Activated CD4-positive, alpha-beta memory T cell treated with anti-CD3 and anti-CD28 coated beads for 36 hours (primary cell): ENCODE measurements at regions of chr7 and their contacts with region 1.

Region 1: GRCh38 chr7:44633254-44634186 is 27.1 kb downstream of the OGDH start:
- DNase-seq: peak; percentile 84
- H3K4me3 Mint-ChIP-seq: peak overlapping the region; percentile 53
- H3K27ac Mint-ChIP-seq: peak overlapping the region; percentile 96
- H3K4me1 Mint-ChIP-seq: peaks cover 97% of the 10 kb centered on the region
- H3K27me3 Mint-ChIP-seq: no peaks in the 10 kb centered on the region

Region 2: DNA sequence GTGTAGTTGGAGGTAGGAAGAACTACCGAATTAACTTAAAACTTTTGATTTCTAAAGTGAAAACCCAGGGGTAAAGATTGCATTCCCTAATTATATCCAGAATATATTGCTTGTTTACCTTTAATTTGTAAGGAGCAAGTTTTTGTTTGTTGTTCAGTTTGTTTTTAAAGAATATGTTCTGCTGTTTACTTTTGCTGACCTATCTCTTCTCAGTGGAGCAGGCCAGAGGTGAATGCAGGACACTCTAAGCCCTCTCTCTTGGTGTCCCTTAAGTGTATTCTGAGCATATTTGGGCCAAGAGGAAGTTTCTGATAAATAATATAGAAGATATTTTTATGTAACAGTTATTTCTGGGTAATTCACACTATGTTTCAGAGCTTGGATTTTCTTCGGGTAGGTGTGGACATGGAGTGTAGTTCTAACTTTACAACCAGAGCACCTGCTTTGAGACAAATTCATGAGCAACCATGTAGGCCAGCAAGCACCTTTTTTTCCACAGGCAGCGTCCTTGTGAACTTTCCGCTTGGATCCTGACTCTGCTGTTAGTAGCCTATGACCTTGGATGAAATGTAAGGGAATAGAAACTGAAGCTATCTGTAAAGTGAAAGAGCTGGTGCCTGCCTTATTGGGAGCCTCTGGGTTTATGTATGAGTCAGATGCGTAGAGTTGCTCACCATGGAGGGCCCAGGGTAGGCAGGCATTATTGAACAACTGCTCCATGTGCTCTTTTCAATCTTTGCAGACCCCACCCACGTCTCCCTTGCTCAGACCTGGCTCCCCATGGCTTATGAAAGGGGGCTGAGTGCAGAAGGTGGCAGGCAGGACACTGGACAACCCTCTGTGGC is 11.0 kb before region 1 on chr7:
- CTCF ChIA-PET with region 1: interaction called, 11 read pairs
- POLR2A ChIA-PET with region 1: interaction called, 34 read pairs
- intact Hi-C with region 1: loop called (anchors 1 kb)
- DNase-seq: peak; percentile 74
- H3K4me3 Mint-ChIP-seq: peak overlapping the region; percentile 69
- H3K27ac Mint-ChIP-seq: peak overlapping the region; percentile 93
- H3K4me1 Mint-ChIP-seq: peaks cover 92% of the 10 kb centered on the region
- H3K27me3 Mint-ChIP-seq: no peaks in the 10 kb centered on the region

Region 3: DNA sequence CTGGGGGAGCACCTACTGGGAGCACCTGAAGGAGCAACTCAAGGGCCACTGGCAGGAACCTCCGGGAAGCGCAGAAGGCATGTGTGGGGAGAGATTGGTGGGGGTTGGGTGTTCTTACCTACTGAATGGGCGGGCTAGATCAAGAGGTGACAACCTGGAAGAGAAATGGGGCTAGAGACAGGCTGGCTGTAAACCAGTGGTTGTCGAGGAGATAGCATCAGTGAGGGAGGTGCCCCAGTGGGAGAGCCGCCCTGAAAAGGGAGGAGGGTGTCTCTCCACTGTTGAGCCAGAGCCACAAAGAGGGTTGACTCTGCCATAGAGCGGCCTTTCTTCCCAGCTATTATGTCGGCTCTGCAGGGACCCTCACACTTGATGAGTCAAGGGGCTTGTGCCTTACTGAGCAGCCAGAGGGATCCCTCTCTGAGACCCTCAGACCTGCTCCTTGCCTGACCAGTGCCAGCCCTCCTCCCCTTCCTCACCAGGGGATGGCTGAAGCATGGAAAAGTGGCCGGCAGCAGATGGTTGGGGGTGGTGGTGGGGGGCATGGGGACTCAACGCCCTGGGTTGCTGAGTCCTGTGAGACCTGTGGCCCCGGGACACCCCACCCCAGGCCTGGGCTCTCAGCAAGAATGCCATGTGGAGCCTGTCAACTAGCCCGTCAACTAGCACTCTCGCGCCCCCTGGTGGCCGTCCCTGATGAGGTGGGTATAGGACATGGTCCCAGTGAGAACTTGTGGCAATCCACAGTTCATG is 288.3 kb after region 1 on chr7:
- CTCF ChIA-PET with region 1: no interaction called
- POLR2A ChIA-PET with region 1: no interaction called
- intact Hi-C with region 1: no loop called
- DNase-seq: peak; percentile 97
- H3K4me3 Mint-ChIP-seq: no peak overlapping the region
- H3K27ac Mint-ChIP-seq: no peak overlapping the region
- H3K4me1 Mint-ChIP-seq: peaks cover 15% of the 10 kb centered on the region
- H3K27me3 Mint-ChIP-seq: no peaks in the 10 kb centered on the region